ENCODE measurements at regions of chr19 and their contacts with region 1.

Region 1: GRCh38 chr19:10835754-10836477 is at the start of gene TMED1:
- DNase-seq: peak; percentile 93 to 94 (median 94)
- H3K4me3 ChIP-seq: peak within 1 kb of the TSS; percentile 93
- H3K4me3 Mint-ChIP-seq: peak within 1 kb of the TSS; percentile 88 to 98 (median 97)
- H3K27ac ChIP-seq: peak within 1 kb of the TSS; percentile 95
- H3K27ac Mint-ChIP-seq: peak within 1 kb of the TSS; percentile 97 to 100 (median 99)
- H3K4me1 ChIP-seq: peaks cover 7% of the 10 kb centered on the region
- H3K4me1 Mint-ChIP-seq: peaks cover 14 to 20% (median 15%) of the 10 kb centered on the region in 3 donors
- H3K27me3 ChIP-seq: no peaks in the 10 kb centered on the region
- H3K27me3 Mint-ChIP-seq: peaks cover 0 to 8% of the 10 kb centered on the region in 2 donors
- total RNA-seq, gene TMED1: 15.7 to 16.6 TPM

Region 2: GRCh38 chr19:10416380-10417257 is 419.3 kb before region 1 on chr19:
- CTCF ChIA-PET with region 1: no interaction called
- POLR2A ChIA-PET with region 1: interaction called, 10 read pairs
- DNase-seq: peak; percentile 96 to 100 (median 98)
- H3K4me3 ChIP-seq: peak overlapping the region; percentile 64
- H3K4me3 Mint-ChIP-seq: peak overlapping the region; percentile 52 to 79 (median 71)
- H3K27ac ChIP-seq: peak overlapping the region; percentile 71
- H3K27ac Mint-ChIP-seq: peak overlapping the region; percentile 77 to 98 (median 94)
- H3K4me1 ChIP-seq: peaks cover 60% of the 10 kb centered on the region
- H3K4me1 Mint-ChIP-seq: peaks cover 50 to 67% (median 56%) of the 10 kb centered on the region in 3 donors
- H3K27me3 ChIP-seq: peaks cover 40% of the 10 kb centered on the region
- H3K27me3 Mint-ChIP-seq: peaks cover 31 to 32% of the 10 kb centered on the region in 2 donors

Region 3: GRCh38 chr19:10730923-10731322 is 105.0 kb before region 1 on chr19:
- CTCF ChIA-PET with region 1: no interaction called
- POLR2A ChIA-PET with region 1: interaction called, 14 read pairs
- DNase-seq: peak in 1 of 5 donors; percentile 8
- H3K4me3 ChIP-seq: peak overlapping the region; percentile 8
- H3K4me3 Mint-ChIP-seq: peak overlapping the region in 4 of 7 donors; percentile 11 to 90 (median 76)
- H3K27ac ChIP-seq: peak overlapping the region; percentile 59
- H3K27ac Mint-ChIP-seq: peak overlapping the region; percentile 91 to 99 (median 98)
- H3K4me1 ChIP-seq: peaks cover 33% of the 10 kb centered on the region
- H3K4me1 Mint-ChIP-seq: peaks cover 49 to 66% (median 54%) of the 10 kb centered on the region in 3 donors
- H3K27me3 ChIP-seq: no peaks in the 10 kb centered on the region
- H3K27me3 Mint-ChIP-seq: no peaks in the 10 kb centered on the region

Region 4: GRCh38 chr19:10760273-10760944 is 75.5 kb before region 1 on chr19:
- CTCF ChIA-PET with region 1: no interaction called
- POLR2A ChIA-PET with region 1: interaction called, 11 read pairs
- DNase-seq: peak in 3 of 5 donors; percentile 24 to 32 (median 29)
- H3K4me3 ChIP-seq: peak overlapping the region; percentile 28
- H3K4me3 Mint-ChIP-seq: peak overlapping the region; percentile 11 to 82 (median 73)
- H3K27ac ChIP-seq: peak overlapping the region; percentile 60
- H3K27ac Mint-ChIP-seq: peak overlapping the region; percentile 85 to 99 (median 95)
- H3K4me1 ChIP-seq: peaks cover 83% of the 10 kb centered on the region
- H3K4me1 Mint-ChIP-seq: peaks cover 70 to 88% (median 87%) of the 10 kb centered on the region in 3 donors
- H3K27me3 ChIP-seq: no peaks in the 10 kb centered on the region
- H3K27me3 Mint-ChIP-seq: no peaks in the 10 kb centered on the region

Region 5: GRCh38 chr19:10797541-10798256 is 38.2 kb before region 1 on chr19:
- CTCF ChIA-PET with region 1: interaction called, 6 read pairs
- POLR2A ChIA-PET with region 1: interaction called, 10 read pairs
- DNase-seq: peak; percentile 71 to 94 (median 87)
- H3K4me3 ChIP-seq: peak overlapping the region; percentile 38
- H3K4me3 Mint-ChIP-seq: peak overlapping the region; percentile 66 to 94 (median 87)
- H3K27ac ChIP-seq: peak overlapping the region; percentile 78
- H3K27ac Mint-ChIP-seq: peak overlapping the region; percentile 96 to 100 (median 99)
- H3K4me1 ChIP-seq: peaks cover 30% of the 10 kb centered on the region
- H3K4me1 Mint-ChIP-seq: peaks cover 33 to 51% (median 43%) of the 10 kb centered on the region in 3 donors
- H3K27me3 ChIP-seq: no peaks in the 10 kb centered on the region
- H3K27me3 Mint-ChIP-seq: no peaks in the 10 kb centered on the region

Region 6: GRCh38 chr19:10864538-10864899 is 28.6 kb after region 1 on chr19:
- CTCF ChIA-PET with region 1: interaction called, 25 read pairs
- POLR2A ChIA-PET with region 1: interaction called, 9 read pairs
- DNase-seq: peak; percentile 68 to 83 (median 73)
- H3K4me3 ChIP-seq: no peak overlapping the region
- H3K4me3 Mint-ChIP-seq: peak overlapping the region in 3 of 7 donors; percentile 14 to 78 (median 61)
- H3K27ac ChIP-seq: no peak overlapping the region
- H3K27ac Mint-ChIP-seq: peak overlapping the region in 4 of 8 donors; percentile 44 to 86 (median 77)
- H3K4me1 ChIP-seq: peaks cover 10% of the 10 kb centered on the region
- H3K4me1 Mint-ChIP-seq: peaks cover 8 to 21% (median 11%) of the 10 kb centered on the region in 3 donors
- H3K27me3 ChIP-seq: no peaks in the 10 kb centered on the region
- H3K27me3 Mint-ChIP-seq: no peaks in the 10 kb centered on the region

Measured in CD8-positive, alpha-beta memory T cell (primary cell).